PC-9 (cell line): ENCODE measurements at regions of chr12 and their contacts with region 1.

Region 1: DNA sequence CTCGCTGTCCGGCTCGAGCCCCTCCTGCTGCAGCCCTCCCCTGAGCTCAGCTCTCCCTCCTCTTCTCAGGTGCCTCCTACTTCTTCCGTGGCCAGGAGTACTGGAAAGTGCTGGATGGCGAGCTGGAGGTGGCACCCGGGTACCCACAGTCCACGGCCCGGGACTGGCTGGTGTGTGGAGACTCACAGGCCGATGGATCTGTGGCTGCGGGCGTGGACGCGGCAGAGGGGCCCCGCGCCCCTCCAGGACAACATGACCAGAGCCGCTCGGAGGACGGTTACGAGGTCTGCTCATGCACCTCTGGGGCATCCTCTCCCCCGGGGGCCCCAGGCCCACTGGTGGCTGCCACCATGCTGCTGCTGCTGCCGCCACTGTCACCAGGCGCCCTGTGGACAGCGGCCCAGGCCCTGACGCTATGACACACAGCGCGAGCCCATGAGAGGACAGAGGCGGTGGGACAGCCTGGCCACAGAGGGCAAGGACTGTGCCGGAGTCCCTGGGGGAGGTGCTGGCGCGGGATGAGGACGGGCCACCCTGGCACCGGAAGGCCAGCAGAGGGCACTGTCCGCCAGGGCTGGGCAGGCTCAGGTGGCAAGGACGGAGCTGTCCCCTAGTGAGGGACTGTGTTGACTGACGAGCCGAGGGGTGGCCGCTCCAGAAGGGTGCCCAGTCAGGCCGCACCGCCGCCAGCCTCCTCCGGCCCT is 22.8 kb downstream of the MMP17 start:
- DNase-seq: peak; percentile 62 to 83
- H3K4me3 ChIP-seq: no peak overlapping the region
- H3K27ac ChIP-seq: no peak overlapping the region
- H3K4me1 ChIP-seq: peaks cover 12% of the 10 kb centered on the region
- H3K27me3 ChIP-seq: peaks cover 1% of the 10 kb centered on the region; the same call in 1 of the 2 replicates
- CTCF ChIP-seq: peak; percentile 89

Region 2: DNA sequence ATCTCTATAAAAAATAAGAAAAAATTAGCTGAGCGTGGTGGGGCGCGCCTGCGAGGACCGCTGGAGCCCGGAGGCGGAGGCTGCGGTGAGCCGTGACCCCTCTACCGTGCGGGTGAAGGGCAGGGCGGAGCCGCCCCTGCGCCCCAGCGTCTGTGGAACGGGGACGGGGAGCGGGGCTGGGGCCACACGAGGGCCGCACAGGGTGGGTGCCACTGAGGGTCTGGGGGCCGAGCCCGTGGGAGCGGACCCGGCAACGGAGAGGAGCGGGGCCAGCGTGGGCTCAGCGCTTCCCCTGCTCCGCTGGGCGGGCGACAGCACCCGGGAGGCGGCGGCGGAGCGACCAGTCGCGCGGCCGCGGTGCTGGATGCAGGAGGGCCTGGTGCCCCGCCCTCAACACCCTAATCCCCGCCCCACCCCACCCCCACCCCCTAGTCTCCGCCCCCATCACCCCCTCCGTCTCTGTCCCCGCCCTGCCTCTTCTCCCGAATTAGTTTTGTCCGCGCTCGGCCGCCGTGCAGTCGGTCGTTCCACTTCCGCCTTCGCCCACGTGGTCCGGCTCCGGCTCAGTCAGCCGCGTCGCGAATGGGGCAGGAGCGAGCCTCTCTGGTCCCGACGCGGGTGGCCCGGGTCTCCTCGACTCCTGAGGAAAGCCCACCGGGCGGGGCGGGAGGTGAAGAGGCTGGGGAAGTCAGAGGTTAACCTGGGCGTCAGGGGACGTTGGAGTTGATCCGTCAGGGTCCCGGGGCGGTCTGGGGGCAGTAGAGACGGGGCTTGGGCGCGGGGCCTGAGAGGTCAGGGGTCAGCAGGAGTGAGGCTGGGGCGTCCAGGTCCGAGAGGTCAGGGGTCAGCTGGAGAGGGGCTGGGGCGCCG is 77.9 kb after region 1 on chr12 and contains the start of gene PUS1:
- CTCF ChIA-PET with region 1: interaction called, 3 read pairs
- POLR2A ChIA-PET with region 1: no interaction called
- intact Hi-C with region 1: loop called (anchors 5 kb)
- DNase-seq: peak; percentile 85 to 92
- H3K4me3 ChIP-seq: peak within 1 kb of the TSS; percentile 98
- H3K27ac ChIP-seq: peak within 1 kb of the TSS; percentile 60; the same call in 1 of the 2 replicates
- H3K4me1 ChIP-seq: peaks cover 8% of the 10 kb centered on the region
- H3K27me3 ChIP-seq: no peaks in the 10 kb centered on the region
- CTCF ChIP-seq: no peak
- total RNA-seq, gene PUS1: 36.4 and 37.0 TPM in 2 replicates

Region 3: DNA sequence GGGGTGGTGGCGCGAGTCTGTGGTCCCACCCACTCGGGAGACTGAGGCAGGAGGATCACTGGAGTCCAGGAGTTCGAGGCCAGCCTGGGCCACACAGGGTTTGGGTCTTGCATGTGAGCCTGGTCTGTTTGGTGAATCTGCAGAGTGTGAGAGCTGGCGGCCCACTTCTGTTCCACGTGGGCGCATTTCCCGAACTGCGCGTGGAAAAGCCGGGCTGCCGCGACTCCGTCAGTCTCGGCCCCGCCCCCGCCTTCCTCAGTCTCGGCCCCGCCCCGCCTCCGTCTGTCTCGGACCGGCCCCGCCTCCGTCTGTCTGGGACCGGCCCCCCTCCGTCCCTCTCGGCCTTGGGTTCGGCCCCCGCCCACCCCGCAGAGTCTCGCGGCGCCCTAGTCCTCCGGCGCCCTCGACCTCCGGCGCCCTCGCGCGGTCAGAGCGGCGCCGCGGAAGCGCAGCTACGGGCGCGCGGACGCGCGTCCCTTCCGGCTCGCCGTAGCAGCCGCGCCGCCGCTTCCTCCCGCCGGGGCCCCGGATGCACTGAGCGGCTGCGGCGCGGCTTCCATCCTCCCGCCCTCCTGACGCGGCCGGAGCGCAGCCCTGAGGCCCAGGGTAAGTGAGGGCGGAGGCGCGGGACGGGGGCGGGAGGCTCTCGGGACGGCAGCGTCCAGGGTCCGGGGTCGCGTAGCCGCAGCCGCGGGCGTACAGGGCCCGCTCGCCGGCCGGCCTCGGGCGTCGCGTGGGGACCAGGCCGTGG is 98.6 kb after region 1 on chr12 and contains the start of gene EP400:
- CTCF ChIA-PET with region 1: no interaction called
- POLR2A ChIA-PET with region 1: no interaction called
- intact Hi-C with region 1: loop called (anchors 1 kb)
- DNase-seq: peak; percentile 81 to 92
- H3K4me3 ChIP-seq: peak within 1 kb of the TSS; percentile 94
- H3K27ac ChIP-seq: 0 out of 2 replicates have a peak within 1 kb of the TSS, but pooled peaks have one; percentile 15
- H3K4me1 ChIP-seq: peaks cover 7% of the 10 kb centered on the region; the same call in 1 of the 2 replicates
- H3K27me3 ChIP-seq: no peaks in the 10 kb centered on the region
- CTCF ChIP-seq: no peak; the same call in 1 of the 2 replicates
- total RNA-seq, gene EP400: 45.0 and 50.3 TPM in 2 replicates

Region 4: GRCh38 chr12:132003846-132004245 is 152.8 kb after region 1 on chr12:
- CTCF ChIA-PET with region 1: no interaction called
- POLR2A ChIA-PET with region 1: no interaction called
- intact Hi-C with region 1: loop called (anchors 1 kb)
- DNase-seq: no peak
- H3K4me3 ChIP-seq: no peak overlapping the region
- H3K27ac ChIP-seq: no peak overlapping the region
- H3K4me1 ChIP-seq: no peaks in the 10 kb centered on the region
- H3K27me3 ChIP-seq: no peaks in the 10 kb centered on the region
- CTCF ChIP-seq: no peak

Region 5: DNA sequence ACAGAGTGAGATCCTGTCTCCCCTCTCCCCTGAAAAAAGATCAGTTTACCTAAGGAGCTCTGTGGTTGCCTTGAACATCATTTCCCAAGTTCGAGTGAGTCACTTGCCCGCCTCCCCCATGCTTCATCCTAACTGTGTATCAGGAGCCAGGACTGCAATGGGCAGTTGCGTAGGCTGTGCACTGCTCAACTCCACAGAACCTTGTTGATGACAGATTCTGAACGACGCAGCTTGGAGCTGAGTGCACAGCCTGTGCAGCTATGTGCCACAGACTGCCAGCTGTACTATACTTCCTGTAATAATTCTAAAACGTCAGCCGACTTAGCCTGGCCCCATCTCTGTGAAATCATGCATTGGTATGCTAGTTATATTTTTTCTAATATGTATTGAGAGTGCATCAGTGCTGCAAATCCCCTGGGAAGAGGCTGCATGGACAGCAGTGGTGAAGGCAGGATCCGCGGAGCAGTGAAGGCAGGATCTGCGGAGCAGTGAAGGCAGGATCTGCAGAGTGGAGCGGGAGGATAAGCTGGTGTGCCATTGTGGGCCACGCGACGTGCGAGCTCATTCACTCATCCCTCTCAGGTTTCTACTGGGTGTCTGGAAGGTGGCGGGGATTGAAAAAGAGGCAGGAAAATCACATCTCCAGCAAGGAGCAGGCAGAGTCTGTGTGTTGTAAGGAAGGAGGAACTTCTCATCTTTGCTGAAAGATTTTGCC is 397.6 kb after region 1 on chr12:
- CTCF ChIA-PET with region 1: no interaction called
- POLR2A ChIA-PET with region 1: no interaction called
- intact Hi-C with region 1: no loop called
- DNase-seq: no peak
- H3K4me3 ChIP-seq: no peak overlapping the region
- H3K27ac ChIP-seq: no peak overlapping the region
- H3K4me1 ChIP-seq: no peaks in the 10 kb centered on the region
- H3K27me3 ChIP-seq: peaks cover 85% of the 10 kb centered on the region
- CTCF ChIP-seq: no peak